Thyroid gland (tissue), 4 donors: ENCODE measurements at regions of chr2 and their contacts with region 1.

Region 1: DNA sequence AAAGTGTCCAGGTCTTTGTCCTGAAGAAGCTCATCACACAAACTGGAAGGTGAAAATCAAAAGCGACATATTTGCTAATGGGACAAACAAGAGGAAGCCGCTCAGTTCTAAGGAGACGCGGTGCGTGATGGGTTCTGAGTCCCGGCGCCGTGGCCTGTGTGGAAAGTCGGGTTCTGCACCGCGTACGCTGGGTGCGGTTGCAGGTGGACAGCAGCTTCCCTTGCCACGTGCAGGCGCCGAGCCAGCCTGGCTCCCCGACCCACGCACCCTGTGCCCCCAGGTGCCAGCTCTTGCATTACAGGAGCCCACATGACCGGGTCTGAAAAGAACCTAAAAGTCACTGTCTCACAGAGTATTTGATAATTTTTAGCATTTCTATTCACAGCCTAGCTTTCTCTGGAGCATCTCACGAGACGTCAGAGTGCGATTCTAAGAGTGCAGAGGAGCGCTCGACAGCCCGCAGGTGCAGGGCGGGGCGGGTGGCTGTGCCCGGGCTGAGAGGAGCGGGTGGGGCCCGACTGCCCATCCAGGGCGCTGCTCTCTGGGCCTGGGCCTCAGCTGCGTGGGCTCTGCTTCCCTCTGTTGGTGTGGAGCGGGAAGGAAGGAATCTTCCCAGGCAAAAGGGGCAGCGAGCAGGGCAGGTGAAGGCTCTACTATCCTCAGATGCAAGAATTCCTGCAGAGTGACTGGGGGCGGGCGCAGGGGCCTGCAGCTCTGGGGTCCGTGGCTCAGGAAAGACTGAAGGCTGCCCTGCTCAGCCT is 39.4 kb downstream of the MYT1L start:
- DNase-seq: peak; percentile 64 to 79
- H3K4me3 ChIP-seq: no peak overlapping the region
- H3K27ac ChIP-seq: no peak overlapping the region
- H3K4me1 ChIP-seq: peaks cover 7 to 14% of the 10 kb centered on the region in 2 donors
- H3K27me3 ChIP-seq: no peaks in the 10 kb centered on the region
- CTCF ChIP-seq: peak; percentile 25 to 63 (median 56)
- POLR2A ChIP-seq: no peak

Region 2: GRCh38 chr2:1868683-1869141 is 423.0 kb before region 1 on chr2:
- intact Hi-C with region 1: loop called (anchors 10 kb)
- DNase-seq: no peak
- H3K4me3 ChIP-seq: no peak overlapping the region
- H3K27ac ChIP-seq: no peak overlapping the region
- H3K4me1 ChIP-seq: peaks cover 35 to 42% of the 10 kb centered on the region in 2 donors
- H3K27me3 ChIP-seq: no peaks in the 10 kb centered on the region
- CTCF ChIP-seq: no peak
- POLR2A ChIP-seq: no peak

Region 3: DNA sequence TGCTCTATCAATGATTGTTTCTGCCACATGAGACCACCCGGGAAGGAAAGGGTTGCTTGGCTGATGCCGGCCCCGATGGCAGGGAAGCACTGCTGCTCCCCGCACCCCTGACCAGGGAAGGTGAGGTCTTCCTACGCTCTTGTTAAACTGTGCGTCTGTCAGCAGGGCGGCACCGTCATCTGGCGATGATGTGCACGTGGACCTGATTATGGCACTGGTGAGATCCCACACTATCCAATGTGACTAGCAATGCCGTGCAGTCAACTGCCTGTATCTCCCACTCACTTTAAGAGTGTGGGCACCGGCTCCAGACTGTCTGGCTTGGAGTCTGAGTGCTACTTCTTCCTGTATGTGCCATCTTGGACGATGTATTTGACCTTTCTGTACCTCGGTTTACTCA is 169.8 kb before region 1 on chr2:
- intact Hi-C with region 1: loop called (anchors 5 kb)
- DNase-seq: no peak
- H3K4me3 ChIP-seq: no peak overlapping the region
- H3K27ac ChIP-seq: no peak overlapping the region
- H3K4me1 ChIP-seq: no peaks in the 10 kb centered on the region
- H3K27me3 ChIP-seq: no peaks in the 10 kb centered on the region
- CTCF ChIP-seq: no peak
- POLR2A ChIP-seq: no peak